ENCODE measurements at regions of chr5 and their contacts with region 1.

Region 1: DNA sequence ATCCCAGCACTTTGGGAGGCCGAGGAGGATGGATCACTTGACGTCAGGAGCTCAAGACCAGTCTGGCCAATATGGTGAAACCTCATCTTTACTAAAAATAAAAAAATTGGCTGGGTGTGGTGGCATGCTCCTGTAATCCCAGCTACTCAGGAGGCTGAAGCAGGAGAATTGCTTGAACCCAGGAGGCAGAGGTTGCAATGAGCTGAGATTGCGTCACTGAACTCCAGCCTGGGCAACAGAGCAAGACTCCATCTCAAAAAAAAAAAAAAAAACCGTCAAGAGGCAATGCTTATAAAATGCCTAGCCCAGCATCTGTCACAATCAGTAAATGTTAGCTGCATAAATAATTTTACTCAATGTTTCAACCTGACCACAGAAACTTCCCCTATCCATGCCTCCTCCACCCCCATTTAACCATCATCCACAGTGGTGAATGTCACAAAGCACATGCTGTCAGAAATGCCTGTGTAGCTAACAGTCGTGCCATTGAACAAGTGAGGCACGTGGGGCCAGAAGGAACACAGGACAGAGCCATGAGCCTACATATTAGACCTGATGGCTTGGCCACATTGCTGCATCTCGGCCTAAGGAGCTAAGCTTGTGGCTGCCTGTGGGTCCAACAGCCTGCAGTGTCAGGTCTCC is 16.8 kb upstream of the TCOF1 start:
- DNase-seq: no peak
- H3K4me3 ChIP-seq: no peak overlapping the region
- H3K27ac ChIP-seq: no peak overlapping the region
- H3K4me1 ChIP-seq: no peaks in the 10 kb centered on the region
- H3K27me3 ChIP-seq: no peaks in the 10 kb centered on the region
- CTCF ChIP-seq: no peak
- POLR2A ChIP-seq: no peak

Region 2: DNA sequence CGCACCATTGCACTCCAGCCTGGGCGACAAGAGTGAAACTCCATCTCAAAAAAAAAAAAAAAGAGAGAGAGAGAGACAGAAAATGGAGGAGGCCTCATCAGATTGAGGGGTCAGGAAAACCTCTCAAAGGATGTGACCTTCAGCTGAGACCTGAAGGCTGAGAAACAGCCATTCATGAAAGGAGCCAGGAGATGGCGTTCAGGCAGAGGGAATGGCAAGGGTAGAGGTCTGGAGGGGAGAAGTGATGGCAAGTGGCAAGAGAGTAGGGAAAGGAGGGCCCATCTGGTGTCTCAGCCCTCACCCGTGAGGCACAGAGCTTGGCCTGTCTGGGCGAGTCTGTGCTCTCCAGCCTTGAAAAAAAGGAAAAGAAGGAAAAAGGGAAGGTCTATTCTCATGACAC is 68.2 kb before region 1 on chr5:
- intact Hi-C with region 1: loop called (anchors 10 kb)
- DNase-seq: no peak
- H3K4me3 ChIP-seq: no peak overlapping the region
- H3K27ac ChIP-seq: no peak overlapping the region
- H3K4me1 ChIP-seq: no peaks in the 10 kb centered on the region
- H3K27me3 ChIP-seq: no peaks in the 10 kb centered on the region
- CTCF ChIP-seq: peak; percentile 8 to 33 (median 30)
- POLR2A ChIP-seq: no peak

Region 3: DNA sequence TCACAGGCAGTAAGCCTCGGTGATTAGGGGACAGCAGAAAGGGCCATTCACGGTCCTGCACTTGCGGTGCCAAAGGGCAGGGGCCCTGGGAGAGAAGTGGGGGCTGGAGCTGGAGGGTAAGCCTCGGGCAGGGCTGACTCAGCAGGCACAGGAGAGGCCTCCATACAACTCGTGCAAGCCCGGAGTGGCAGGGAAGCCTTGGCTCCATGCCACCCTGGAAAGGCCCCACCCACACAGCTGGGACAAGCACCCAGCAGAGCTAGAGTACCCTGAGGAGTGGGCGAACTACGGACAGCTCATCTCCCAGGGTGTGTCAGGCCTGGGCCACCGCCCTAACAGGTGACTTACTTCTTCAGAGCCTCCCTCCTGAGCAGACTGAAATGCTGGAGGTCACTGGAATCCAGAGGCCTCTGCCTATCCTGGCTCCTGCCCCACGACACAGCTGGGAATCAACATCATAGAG is 45.5 kb before region 1 on chr5:
- intact Hi-C with region 1: no loop called
- DNase-seq: peak; percentile 54 to 63
- H3K4me3 ChIP-seq: no peak overlapping the region
- H3K27ac ChIP-seq: peak overlapping the region; percentile 28 to 63
- H3K4me1 ChIP-seq: peaks cover 5 to 9% of the 10 kb centered on the region in 2 donors
- H3K27me3 ChIP-seq: no peaks in the 10 kb centered on the region
- CTCF ChIP-seq: no peak
- POLR2A ChIP-seq: no peak